ENCODE measurements at regions of chr18 and their contacts with region 1.

Region 1: DNA sequence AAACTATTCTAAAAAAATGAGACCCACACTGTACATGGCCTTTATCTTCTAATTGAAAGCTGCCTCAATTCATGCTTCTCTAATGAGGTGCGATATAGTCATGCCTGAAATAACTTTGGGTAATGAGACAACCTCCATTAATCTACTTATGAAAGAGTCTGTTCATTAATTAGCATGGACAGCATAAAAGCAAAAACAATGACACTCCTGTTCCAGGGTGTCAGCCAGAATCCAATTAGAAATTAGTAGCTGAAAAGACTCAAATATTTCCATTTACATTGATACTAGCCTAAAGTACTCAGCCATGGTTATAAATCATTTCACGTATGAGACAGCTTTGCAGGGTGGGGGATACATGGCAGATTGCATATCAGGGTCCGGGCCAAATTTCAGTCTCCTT is 288.7 kb downstream of the AKAIN1 start:
- DNase-seq: no peak
- ATAC-seq: no peak
- H3K4me3 ChIP-seq: no peak overlapping the region
- H3K27ac ChIP-seq: no peak overlapping the region
- H3K4me1 ChIP-seq: no peaks in the 10 kb centered on the region
- H3K27me3 ChIP-seq: no peaks in the 10 kb centered on the region
- CTCF ChIP-seq: no peak
- EP300 ChIP-seq: no peak
- POLR2A ChIP-seq: no peak
- RAD21 ChIP-seq: no peak

Region 2: DNA sequence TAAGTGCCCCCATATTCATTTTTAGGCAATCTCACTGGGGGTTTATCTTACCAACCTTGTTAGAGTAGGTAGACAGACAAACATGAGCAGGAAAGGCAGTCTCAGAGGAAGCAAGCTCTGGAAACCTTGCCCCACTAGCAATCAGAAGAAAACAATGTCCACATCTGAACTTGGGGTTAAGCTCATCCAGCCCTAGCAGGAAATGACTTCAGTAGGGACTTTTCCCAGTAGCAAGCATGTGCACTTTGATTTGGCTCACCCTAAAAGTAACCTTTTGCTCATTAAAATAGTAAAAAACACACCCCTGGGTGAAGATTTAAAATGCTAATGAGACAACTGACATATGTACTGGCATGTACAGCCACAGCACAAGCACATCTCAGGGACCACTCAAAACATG is 113.2 kb after region 1 on chr18:
- CTCF ChIA-PET with region 1: no interaction called
- POLR2A ChIA-PET with region 1: no interaction called
- in situ Hi-C with region 1: loop called (anchors 25 kb)
- intact Hi-C with region 1: no loop called
- DNase-seq: no peak
- ATAC-seq: no peak
- H3K4me3 ChIP-seq: no peak overlapping the region
- H3K27ac ChIP-seq: no peak overlapping the region
- H3K4me1 ChIP-seq: no peaks in the 10 kb centered on the region
- H3K27me3 ChIP-seq: no peaks in the 10 kb centered on the region
- CTCF ChIP-seq: no peak
- EP300 ChIP-seq: no peak
- POLR2A ChIP-seq: no peak
- RAD21 ChIP-seq: no peak